Adrenal gland (tissue), 19 donors: ENCODE measurements at regions of chr10 and their contacts with region 1.

Region 1: GRCh38 chr10:50614444-50615137 is 9.2 kb downstream of the SGMS1 start:
- DNase-seq: no peak
- H3K4me3 ChIP-seq: no peak overlapping the region
- H3K27ac ChIP-seq: no peak overlapping the region
- H3K4me1 ChIP-seq: peaks cover 1 to 15% of the 10 kb centered on the region in 2 donors
- H3K27me3 ChIP-seq: no peaks in the 10 kb centered on the region
- CTCF ChIP-seq: peak in 2 of 6 experiments; percentile 12 to 27
- POLR2A ChIP-seq: no peak

Region 2: GRCh38 chr10:50561816-50562215 is 52.8 kb before region 1 on chr10:
- intact Hi-C with region 1: loop called (anchors 10 kb)
- DNase-seq: no peak
- H3K4me3 ChIP-seq: no peak overlapping the region
- H3K27ac ChIP-seq: peak overlapping the region in 3 of 5 donors; percentile 57 to 74 (median 70)
- H3K4me1 ChIP-seq: peaks cover 13 to 35% of the 10 kb centered on the region in 2 donors
- H3K27me3 ChIP-seq: no peaks in the 10 kb centered on the region
- CTCF ChIP-seq: peak; percentile 23 to 62 (median 55)
- POLR2A ChIP-seq: no peak

Region 3: GRCh38 chr10:50674469-50675254 is 60.1 kb after region 1 on chr10:
- intact Hi-C with region 1: no loop called
- DNase-seq: no peak
- H3K4me3 ChIP-seq: no peak overlapping the region
- H3K27ac ChIP-seq: no peak overlapping the region
- H3K4me1 ChIP-seq: no peaks in the 10 kb centered on the region
- H3K27me3 ChIP-seq: no peaks in the 10 kb centered on the region
- CTCF ChIP-seq: no peak
- POLR2A ChIP-seq: no peak

Region 4: GRCh38 chr10:50739618-50740292 is 125.2 kb after region 1 on chr10 and contains the start of gene ASAH2B:
- intact Hi-C with region 1: no loop called
- DNase-seq: peak; percentile 84 to 92 (median 88)
- H3K4me3 ChIP-seq: peak within 1 kb of the TSS; percentile 21 to 87 (median 78)
- H3K27ac ChIP-seq: peak within 1 kb of the TSS; percentile 20 to 94 (median 80)
- H3K4me1 ChIP-seq: peaks cover 0 to 5% of the 10 kb centered on the region in 2 donors
- H3K27me3 ChIP-seq: no peaks in the 10 kb centered on the region
- CTCF ChIP-seq: no peak
- POLR2A ChIP-seq: peak in 1 of 2 donors; percentile 36
- total RNA-seq, gene ASAH2B: 1.9 to 8.8 (median 5.3) TPM